Mammary epithelial cell (primary cell): ENCODE measurements at regions of chr2 and their contacts with region 1.

Region 1: DNA sequence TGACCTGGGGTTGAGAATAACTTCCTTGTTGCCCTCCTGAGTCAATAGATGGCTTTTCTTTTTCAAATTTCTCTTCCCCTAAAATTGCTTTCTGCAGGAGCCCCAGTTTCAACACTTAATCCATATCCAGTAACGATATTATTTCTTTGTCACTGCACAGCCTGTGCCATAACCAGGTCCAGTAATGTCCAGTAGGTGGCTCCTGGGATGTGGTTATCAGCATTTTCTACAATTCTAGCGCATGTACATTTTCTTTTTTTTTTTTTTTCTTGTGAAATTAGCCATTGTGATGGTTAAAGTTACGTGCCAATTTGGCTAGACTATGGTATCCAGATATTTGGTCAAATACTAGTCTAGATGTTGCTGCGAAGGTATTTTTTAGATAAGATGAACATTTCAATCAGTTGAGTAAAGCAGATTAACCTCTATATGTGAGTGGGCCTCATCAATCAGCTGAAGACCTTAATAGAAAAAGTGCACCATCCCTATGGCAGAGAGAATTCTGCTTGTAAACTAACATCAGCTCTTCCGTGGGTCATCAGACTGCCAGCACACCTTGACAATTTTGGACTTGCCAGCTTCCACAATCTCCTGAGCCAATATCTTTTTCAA is 72.9 kb upstream of the SCG2 start:
- DNase-seq: peak; percentile 46
- H3K4me3 ChIP-seq: no peak overlapping the region
- H3K27ac ChIP-seq: no peak overlapping the region
- H3K4me1 ChIP-seq: no peaks in the 10 kb centered on the region
- H3K27me3 ChIP-seq: no peaks in the 10 kb centered on the region
- CTCF ChIP-seq: peak; percentile 81 to 87

Region 2: GRCh38 chr2:222976521-222977076 is 698.5 kb before region 1 on chr2:
- CTCF ChIA-PET with region 1: no interaction called
- dilution Hi-C with region 1: no loop called
- in situ Hi-C with region 1: no loop called
- intact Hi-C with region 1: loop called (anchors 5 kb)
- DNase-seq: no peak
- H3K4me3 ChIP-seq: no peak overlapping the region
- H3K27ac ChIP-seq: no peak overlapping the region
- H3K4me1 ChIP-seq: peaks cover 15% of the 10 kb centered on the region
- H3K27me3 ChIP-seq: no peaks in the 10 kb centered on the region
- CTCF ChIP-seq: no peak

Region 3: GRCh38 chr2:223635080-223635479 is 40.0 kb before region 1 on chr2:
- CTCF ChIA-PET with region 1: no interaction called
- dilution Hi-C with region 1: no loop called
- in situ Hi-C with region 1: no loop called
- intact Hi-C with region 1: no loop called
- DNase-seq: peak; percentile 55
- H3K4me3 ChIP-seq: no peak overlapping the region
- H3K27ac ChIP-seq: no peak overlapping the region
- H3K4me1 ChIP-seq: no peaks in the 10 kb centered on the region
- H3K27me3 ChIP-seq: no peaks in the 10 kb centered on the region
- CTCF ChIP-seq: no peak

Region 4: DNA sequence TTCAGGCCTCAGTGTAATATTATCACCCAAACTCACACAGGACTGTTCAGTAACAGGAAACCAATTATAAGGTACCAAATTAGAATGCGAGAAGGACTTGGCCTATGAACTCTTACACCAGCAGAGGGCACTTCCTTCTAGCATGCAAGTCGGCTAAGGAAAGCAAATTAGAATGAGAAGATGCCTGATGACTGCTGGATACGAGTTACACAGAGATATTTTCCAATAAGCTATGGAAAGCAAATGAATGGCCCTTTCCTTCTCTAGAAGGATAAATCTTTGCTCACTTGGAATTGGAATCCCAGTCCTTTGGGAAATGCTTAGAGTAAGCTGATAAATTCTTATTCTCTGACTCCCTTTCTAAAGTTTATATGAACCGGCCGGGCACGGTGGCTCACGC is 52.5 kb after region 1 on chr2:
- CTCF ChIA-PET with region 1: no interaction called
- dilution Hi-C with region 1: no loop called
- in situ Hi-C with region 1: no loop called
- intact Hi-C with region 1: no loop called
- DNase-seq: peak; percentile 62
- H3K4me3 ChIP-seq: no peak overlapping the region
- H3K27ac ChIP-seq: no peak overlapping the region
- H3K4me1 ChIP-seq: peaks cover 21% of the 10 kb centered on the region
- H3K27me3 ChIP-seq: no peaks in the 10 kb centered on the region
- CTCF ChIP-seq: peak; percentile 57 to 80

Region 5: GRCh38 chr2:223854741-223855140 is 179.6 kb after region 1 on chr2:
- CTCF ChIA-PET with region 1: interaction called, 23 read pairs
- dilution Hi-C with region 1: no loop called
- in situ Hi-C with region 1: no loop called
- intact Hi-C with region 1: no loop called
- DNase-seq: no peak
- H3K4me3 ChIP-seq: no peak overlapping the region
- H3K27ac ChIP-seq: no peak overlapping the region
- H3K4me1 ChIP-seq: peaks cover 7% of the 10 kb centered on the region
- H3K27me3 ChIP-seq: no peaks in the 10 kb centered on the region
- CTCF ChIP-seq: no peak